ENCODE measurements at regions of chr15 and their contacts with region 1.

Region 1: GRCh38 chr15:38690689-38691332 is 126.2 kb upstream of the RASGRP1 start:
- DNase-seq: peak; percentile 84
- H3K4me3 ChIP-seq: no peak overlapping the region
- H3K27ac ChIP-seq: no peak overlapping the region
- H3K4me1 ChIP-seq: no peaks in the 10 kb centered on the region
- H3K27me3 ChIP-seq: peaks cover 9 to 24% of the 10 kb centered on the region in 2 experiments
- CTCF ChIP-seq: peak; percentile 71 to 86
- POLR2A ChIP-seq: no peak

Region 2: GRCh38 chr15:38474155-38474757 is 216.6 kb before region 1 on chr15:
- CTCF ChIA-PET with region 1: interaction called, 33 read pairs
- POLR2A ChIA-PET with region 1: no interaction called
- dilution Hi-C with region 1: no loop called
- intact Hi-C with region 1: no loop called
- DNase-seq: peak; percentile 72
- H3K4me3 ChIP-seq: no peak overlapping the region
- H3K27ac ChIP-seq: no peak overlapping the region
- H3K4me1 ChIP-seq: peaks cover 4% of the 10 kb centered on the region
- H3K27me3 ChIP-seq: no peaks in the 10 kb centered on the region
- CTCF ChIP-seq: peak; percentile 44 to 65
- POLR2A ChIP-seq: no peak

Measured in endothelial cell of umbilical vein (primary cell).